ENCODE measurements at regions of chr6 and their contacts with region 1.

Region 1: GRCh38 chr6:139375232-139376016 is 976 bp upstream of the CITED2 start:
- DNase-seq: peak; percentile 88
- ATAC-seq: peak; percentile 75
- H3K4me3 Mint-ChIP-seq: peak overlapping the region; percentile 72
- H3K27ac Mint-ChIP-seq: peak overlapping the region; percentile 99
- H3K4me1 Mint-ChIP-seq: peaks cover 32% of the 10 kb centered on the region
- H3K27me3 Mint-ChIP-seq: no peaks in the 10 kb centered on the region
- CTCF ChIP-seq: no peak

Region 2: GRCh38 chr6:139250296-139251044 is 125.0 kb before region 1 on chr6:
- CTCF ChIA-PET with region 1: no interaction called
- POLR2A ChIA-PET with region 1: no interaction called
- DNase-seq: peak; percentile 79
- ATAC-seq: peak; percentile 100
- H3K4me3 Mint-ChIP-seq: no peak overlapping the region
- H3K27ac Mint-ChIP-seq: no peak overlapping the region
- H3K4me1 Mint-ChIP-seq: no peaks in the 10 kb centered on the region
- H3K27me3 Mint-ChIP-seq: no peaks in the 10 kb centered on the region
- CTCF ChIP-seq: peak; percentile 57

Region 3: GRCh38 chr6:139349464-139350020 is 25.9 kb before region 1 on chr6:
- CTCF ChIA-PET with region 1: no interaction called
- POLR2A ChIA-PET with region 1: no interaction called
- DNase-seq: no peak
- ATAC-seq: no peak
- H3K4me3 Mint-ChIP-seq: no peak overlapping the region
- H3K27ac Mint-ChIP-seq: no peak overlapping the region
- H3K4me1 Mint-ChIP-seq: peaks cover 12% of the 10 kb centered on the region
- H3K27me3 Mint-ChIP-seq: no peaks in the 10 kb centered on the region
- CTCF ChIP-seq: no peak

Region 4: DNA sequence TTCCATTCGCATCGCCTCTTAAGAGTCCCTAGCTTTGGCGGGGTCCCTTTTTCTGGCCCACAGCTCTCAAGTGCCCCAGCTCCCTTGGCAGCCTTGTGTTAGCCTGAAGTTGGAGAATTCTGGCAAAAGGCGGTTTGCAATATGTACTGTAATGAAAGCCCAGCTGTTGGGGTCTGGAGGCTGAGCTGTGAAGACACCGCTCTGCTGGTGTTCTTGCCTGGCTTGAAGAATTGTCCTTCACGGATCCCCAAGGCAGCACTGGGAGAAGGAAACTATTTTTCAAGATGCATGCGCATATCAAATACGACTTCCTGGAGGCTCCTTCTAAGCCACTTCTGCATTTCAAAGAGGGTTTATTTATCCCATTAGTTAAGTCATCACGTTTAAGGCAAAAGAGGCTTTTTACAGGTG is 20.5 kb after region 1 on chr6:
- CTCF ChIA-PET with region 1: interaction called, 3 read pairs
- POLR2A ChIA-PET with region 1: interaction called, 11 read pairs
- DNase-seq: peak; percentile 36
- ATAC-seq: peak; percentile 91
- H3K4me3 Mint-ChIP-seq: peak overlapping the region; percentile 26; the same call in 1 of the 2 replicates
- H3K27ac Mint-ChIP-seq: no peak overlapping the region
- H3K4me1 Mint-ChIP-seq: peaks cover 14% of the 10 kb centered on the region
- H3K27me3 Mint-ChIP-seq: peaks cover 83% of the 10 kb centered on the region
- CTCF ChIP-seq: no peak

Region 5: GRCh38 chr6:139474145-139475108 is 99.0 kb after region 1 on chr6:
- CTCF ChIA-PET with region 1: interaction called, 5 read pairs
- POLR2A ChIA-PET with region 1: interaction called, 27 read pairs
- DNase-seq: no peak
- ATAC-seq: peak; percentile 46
- H3K4me3 Mint-ChIP-seq: peak overlapping the region; percentile 53
- H3K27ac Mint-ChIP-seq: peak overlapping the region; percentile 97
- H3K4me1 Mint-ChIP-seq: peaks cover 66% of the 10 kb centered on the region
- H3K27me3 Mint-ChIP-seq: no peaks in the 10 kb centered on the region
- CTCF ChIP-seq: no peak

Region 6: GRCh38 chr6:139480356-139480833 is 105.0 kb after region 1 on chr6:
- CTCF ChIA-PET with region 1: interaction called, 4 read pairs
- POLR2A ChIA-PET with region 1: interaction called, 27 read pairs
- DNase-seq: no peak
- ATAC-seq: no peak
- H3K4me3 Mint-ChIP-seq: no peak overlapping the region
- H3K27ac Mint-ChIP-seq: no peak overlapping the region
- H3K4me1 Mint-ChIP-seq: peaks cover 77% of the 10 kb centered on the region
- H3K27me3 Mint-ChIP-seq: no peaks in the 10 kb centered on the region; the same call in 1 of the 2 replicates
- CTCF ChIP-seq: no peak

Region 7: DNA sequence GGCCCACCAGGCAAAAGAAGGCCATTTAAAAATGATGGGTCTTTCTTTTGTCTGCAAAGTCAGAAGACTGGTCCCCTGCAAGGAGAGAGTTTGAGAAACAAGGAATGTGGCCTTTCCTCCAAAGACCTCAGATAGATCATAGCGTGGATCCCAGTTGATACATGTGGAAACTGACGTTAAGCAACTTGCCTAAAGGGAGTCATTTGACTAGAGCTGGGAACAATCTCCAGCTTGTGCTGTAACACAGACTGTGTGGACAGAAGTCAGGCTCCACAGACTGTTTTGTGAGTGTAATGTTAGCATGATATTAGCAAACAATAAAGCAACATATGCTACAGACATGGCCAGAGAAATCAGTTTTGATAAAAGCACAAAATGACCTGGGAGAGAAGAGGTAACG is 139.4 kb after region 1 on chr6:
- CTCF ChIA-PET with region 1: no interaction called
- POLR2A ChIA-PET with region 1: no interaction called
- DNase-seq: no peak
- ATAC-seq: no peak
- H3K4me3 Mint-ChIP-seq: no peak overlapping the region
- H3K27ac Mint-ChIP-seq: no peak overlapping the region
- H3K4me1 Mint-ChIP-seq: peaks cover 8% of the 10 kb centered on the region
- H3K27me3 Mint-ChIP-seq: no peaks in the 10 kb centered on the region
- CTCF ChIP-seq: no peak

Region 8: GRCh38 chr6:139588076-139588639 is 212.7 kb after region 1 on chr6:
- CTCF ChIA-PET with region 1: no interaction called
- POLR2A ChIA-PET with region 1: interaction called, 10 read pairs
- DNase-seq: no peak
- ATAC-seq: no peak
- H3K4me3 Mint-ChIP-seq: no peak overlapping the region
- H3K27ac Mint-ChIP-seq: no peak overlapping the region
- H3K4me1 Mint-ChIP-seq: peaks cover 9% of the 10 kb centered on the region; the same call in 1 of the 2 replicates
- H3K27me3 Mint-ChIP-seq: no peaks in the 10 kb centered on the region
- CTCF ChIP-seq: no peak

Region 9: GRCh38 chr6:139888681-139889122 is 513.3 kb after region 1 on chr6:
- CTCF ChIA-PET with region 1: interaction called, 9 read pairs
- POLR2A ChIA-PET with region 1: interaction called, 18 read pairs
- DNase-seq: peak; percentile 18
- ATAC-seq: peak; percentile 89
- H3K4me3 Mint-ChIP-seq: peak overlapping the region; percentile 37
- H3K27ac Mint-ChIP-seq: peak overlapping the region; percentile 99
- H3K4me1 Mint-ChIP-seq: peaks cover 67% of the 10 kb centered on the region
- H3K27me3 Mint-ChIP-seq: no peaks in the 10 kb centered on the region
- CTCF ChIP-seq: no peak

Measured in WTC11 (cell line).